Heart right ventricle (tissue), 16 donors: ENCODE measurements at regions of chr4 and their contacts with region 1.

Region 1: DNA sequence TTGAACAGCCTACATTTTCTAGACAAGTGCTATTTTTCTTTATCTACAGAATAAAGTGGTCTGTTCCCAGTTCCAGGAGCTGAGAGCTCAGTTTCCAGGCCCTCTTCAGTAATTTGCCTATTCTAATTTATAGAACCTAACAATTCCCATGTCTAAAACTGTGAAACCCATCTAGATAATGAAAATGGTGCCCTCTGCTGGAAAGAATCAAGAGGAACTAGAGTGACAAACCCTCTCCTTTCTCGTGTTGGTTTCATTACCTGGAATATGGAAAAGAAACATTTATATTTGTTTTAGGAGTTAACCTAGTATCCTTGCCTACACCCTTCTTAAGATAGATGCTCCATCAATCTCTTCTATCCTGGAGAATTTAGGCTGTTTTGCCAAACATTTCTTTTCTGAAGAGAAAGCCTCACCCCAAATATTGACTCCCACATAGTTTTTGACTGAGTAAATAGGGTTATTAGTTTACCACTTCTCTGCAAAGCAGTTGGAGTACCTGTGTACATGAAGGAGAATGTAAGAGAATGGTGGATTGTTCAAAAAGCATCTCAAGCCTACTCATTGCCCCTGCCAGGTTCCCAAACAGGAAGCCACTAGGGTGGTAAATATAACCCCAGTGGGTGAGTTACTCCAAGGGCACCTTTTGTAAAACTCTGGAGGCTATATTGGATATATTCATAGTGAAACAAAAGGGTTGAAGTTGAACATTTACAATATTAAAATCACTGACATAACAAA is 121.6 kb downstream of the RASL11B start:
- DNase-seq: peak in 1 of 2 donors; percentile 45
- ATAC-seq: peak in 7 of 8 donors; percentile 40 to 89 (median 77)
- H3K4me3 ChIP-seq: no peak overlapping the region
- H3K27ac ChIP-seq: peak overlapping the region in 2 of 10 donors; percentile 34 to 45
- H3K4me1 ChIP-seq: peaks cover 0 to 22% (median 13%) of the 10 kb centered on the region in 9 donors
- H3K27me3 ChIP-seq: no peaks in the 10 kb centered on the region
- CTCF ChIP-seq: peak; percentile 50 to 84 (median 76)

Region 2: DNA sequence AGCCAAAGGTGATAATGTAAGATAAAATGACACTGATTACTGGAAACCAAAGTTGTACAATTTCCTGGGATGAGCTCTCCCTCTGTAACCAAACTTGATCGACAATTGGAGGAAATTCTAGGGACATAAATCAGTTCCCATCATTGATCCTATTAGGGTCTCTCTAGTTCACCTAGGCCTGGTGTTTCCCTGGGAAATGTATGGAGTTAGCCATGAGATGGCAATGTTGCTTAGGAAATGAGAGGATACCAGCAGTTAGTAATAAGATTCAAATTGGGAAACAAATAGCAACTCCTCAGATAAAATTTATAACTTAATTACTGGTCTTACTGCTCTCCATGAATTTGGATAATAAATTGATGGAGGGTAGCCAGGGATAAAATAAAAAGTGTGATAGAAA is 880.4 kb before region 1 on chr4:
- intact Hi-C with region 1: loop called in 1 of 10 experiments (anchors 10 kb)
- DNase-seq: no peak
- ATAC-seq: peak in 1 of 8 donors; percentile 35
- H3K4me3 ChIP-seq: no peak overlapping the region
- H3K27ac ChIP-seq: no peak overlapping the region
- H3K4me1 ChIP-seq: peaks cover 0 to 12% (median 0%) of the 10 kb centered on the region in 9 donors
- H3K27me3 ChIP-seq: no peaks in the 10 kb centered on the region
- CTCF ChIP-seq: peak in 6 of 9 donors; percentile 14 to 45 (median 34)

Region 3: GRCh38 chr4:52369649-52370048 is 614.1 kb before region 1 on chr4:
- intact Hi-C with region 1: loop called in 2 of 10 experiments (anchors 2 to 5 kb)
- DNase-seq: no peak
- ATAC-seq: no peak
- H3K4me3 ChIP-seq: no peak overlapping the region
- H3K27ac ChIP-seq: no peak overlapping the region
- H3K4me1 ChIP-seq: no peaks in the 10 kb centered on the region
- H3K27me3 ChIP-seq: no peaks in the 10 kb centered on the region
- CTCF ChIP-seq: no peak

Region 4: GRCh38 chr4:52545099-52546069 is 438.3 kb before region 1 on chr4:
- intact Hi-C with region 1: loop called in 9 of 10 experiments (anchors 2 to 5 kb)
- DNase-seq: peak; percentile 71 to 75
- ATAC-seq: peak; percentile 76 to 91 (median 82)
- H3K4me3 ChIP-seq: peak overlapping the region in 2 of 10 donors; percentile 4 to 16
- H3K27ac ChIP-seq: peak overlapping the region in 6 of 10 donors; percentile 57 to 87 (median 74)
- H3K4me1 ChIP-seq: peaks cover 5 to 37% (median 17%) of the 10 kb centered on the region in 9 donors
- H3K27me3 ChIP-seq: no peaks in the 10 kb centered on the region
- CTCF ChIP-seq: peak; percentile 90 to 99 (median 93)

Region 5: DNA sequence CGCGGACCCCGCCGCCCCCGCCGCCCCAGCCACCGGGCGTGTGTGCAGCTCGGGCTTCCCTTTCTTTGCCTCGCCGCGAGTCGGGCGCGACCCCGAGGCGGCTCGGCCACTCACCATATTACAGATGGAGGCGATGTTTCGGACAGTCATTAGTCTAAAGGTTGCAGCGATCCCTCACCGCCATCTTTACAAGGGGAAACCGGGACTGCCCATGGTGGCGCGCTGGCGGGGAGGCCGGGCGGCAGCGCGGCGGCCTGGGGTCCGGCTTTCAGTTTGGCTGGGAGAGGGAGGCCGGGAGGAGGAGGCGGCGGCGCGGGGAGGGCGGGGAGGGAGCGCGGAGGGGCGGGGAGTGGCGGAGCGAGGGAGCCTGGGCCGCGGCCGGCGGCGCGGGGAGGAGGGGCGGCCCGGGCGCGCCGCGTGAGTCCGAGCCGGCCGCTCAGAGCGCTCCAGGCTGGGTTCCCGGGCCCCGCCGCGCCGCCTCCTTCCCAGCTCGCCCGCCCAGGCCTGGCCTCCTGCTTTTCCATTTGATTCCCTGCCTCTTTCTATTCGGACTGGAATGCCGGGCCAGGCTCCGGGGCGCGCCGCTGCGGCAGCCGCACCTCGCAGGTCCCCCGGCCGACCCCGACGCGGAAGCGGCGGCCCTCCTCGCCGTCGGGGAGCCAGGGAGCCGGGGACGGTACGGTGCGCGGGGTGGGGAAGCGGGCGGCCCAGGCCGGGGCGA is 324.6 kb before region 1 on chr4 and contains the start of gene USP46:
- intact Hi-C with region 1: loop called in 2 of 10 experiments (anchors 5 kb)
- DNase-seq: peak; percentile 81 to 84
- ATAC-seq: peak; percentile 77 to 96 (median 92)
- H3K4me3 ChIP-seq: peak within 1 kb of the TSS; percentile 51 to 93 (median 85)
- H3K27ac ChIP-seq: peak within 1 kb of the TSS; percentile 95 to 100 (median 98)
- H3K4me1 ChIP-seq: peaks cover 0 to 71% (median 47%) of the 10 kb centered on the region in 9 donors
- H3K27me3 ChIP-seq: no peaks in the 10 kb centered on the region
- CTCF ChIP-seq: no peak
- total RNA-seq, gene USP46: 46.8 to 113 (median 74.8) TPM

Region 6: DNA sequence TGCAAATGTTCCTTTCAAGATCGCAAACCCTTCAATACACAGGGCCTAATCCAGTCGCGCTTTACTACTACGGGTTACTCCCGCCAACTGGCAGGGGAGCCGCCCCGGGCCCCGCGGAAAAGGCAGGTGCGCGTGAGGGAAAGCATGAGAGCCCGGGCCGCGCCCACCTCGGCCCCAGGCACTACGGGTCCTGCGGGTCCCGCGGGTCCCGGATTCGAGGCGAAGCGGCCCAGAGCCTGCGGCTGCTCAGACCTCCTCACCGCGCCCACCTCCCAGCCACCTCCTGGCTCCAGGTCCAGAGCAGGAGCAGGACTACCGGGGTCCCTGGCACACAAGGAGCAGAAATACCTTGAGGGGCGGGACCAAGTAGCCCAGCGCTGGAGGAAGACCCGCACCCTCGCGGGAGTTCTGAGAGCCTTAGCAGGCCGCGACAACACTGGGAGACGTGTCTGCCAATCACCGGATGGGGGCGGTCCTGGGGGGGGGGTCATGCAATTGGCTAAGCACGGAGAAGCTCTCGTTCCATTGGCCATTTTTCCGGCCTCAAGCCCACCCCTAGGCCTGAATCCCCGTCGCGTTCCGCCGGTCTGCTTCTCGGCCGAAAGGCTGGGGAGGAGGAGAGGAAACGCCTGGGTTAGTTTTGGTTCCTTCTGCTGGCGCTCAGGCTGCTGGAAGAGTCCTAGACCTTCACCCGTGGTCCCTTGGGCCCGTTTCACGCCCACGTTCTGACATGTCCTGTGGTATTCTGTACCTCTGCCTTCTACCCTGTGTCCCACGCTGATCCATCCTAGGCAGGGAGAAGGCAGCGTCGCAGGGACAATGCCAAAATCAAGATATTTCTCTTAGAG is 261.5 kb before region 1 on chr4:
- intact Hi-C with region 1: loop called in 3 of 10 experiments (anchors 5 to 10 kb)
- DNase-seq: peak; percentile 91 to 97
- ATAC-seq: peak; percentile 98 to 100 (median 99)
- H3K4me3 ChIP-seq: peak overlapping the region; percentile 67 to 96 (median 88)
- H3K27ac ChIP-seq: peak overlapping the region; percentile 63 to 93 (median 84)
- H3K4me1 ChIP-seq: peaks cover 0 to 15% (median 10%) of the 10 kb centered on the region in 9 donors
- H3K27me3 ChIP-seq: no peaks in the 10 kb centered on the region
- CTCF ChIP-seq: peak in 1 of 9 donors; percentile 34

Region 7: GRCh38 chr4:52799813-52800212 is 183.9 kb before region 1 on chr4:
- intact Hi-C with region 1: no loop called
- DNase-seq: no peak
- ATAC-seq: no peak
- H3K4me3 ChIP-seq: no peak overlapping the region
- H3K27ac ChIP-seq: no peak overlapping the region
- H3K4me1 ChIP-seq: no peaks in the 10 kb centered on the region
- H3K27me3 ChIP-seq: no peaks in the 10 kb centered on the region
- CTCF ChIP-seq: peak in 1 of 9 donors; percentile 5